ENCODE measurements at regions of chr7 and their contacts with region 1.

Region 1: DNA sequence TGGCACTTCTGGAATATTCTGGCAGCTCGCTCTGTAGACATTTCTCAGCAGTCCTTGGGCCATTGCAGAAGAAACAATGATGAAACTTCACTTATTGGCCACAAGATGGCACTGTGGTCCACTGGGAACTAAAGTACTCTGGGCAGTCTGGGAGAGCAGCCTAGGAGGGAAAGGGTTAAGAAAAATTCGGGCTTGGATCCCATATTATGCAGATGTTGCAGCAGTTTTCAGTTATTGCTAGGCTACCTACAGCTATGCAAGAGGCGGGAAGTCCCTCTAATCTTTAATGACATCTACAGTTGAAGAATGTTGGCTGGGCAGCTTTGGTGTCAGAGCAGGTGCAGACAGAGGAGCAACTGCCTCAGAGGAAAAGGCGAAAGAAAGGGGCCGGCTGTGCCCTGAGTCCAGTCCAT is 201.7 kb upstream of the PRSS58 start:
- DNase-seq: peak; percentile 59
- H3K4me3 Mint-ChIP-seq: peak overlapping the region; percentile 16
- H3K27ac Mint-ChIP-seq: peak overlapping the region; percentile 9
- H3K4me1 Mint-ChIP-seq: peaks cover 71% of the 10 kb centered on the region
- H3K27me3 Mint-ChIP-seq: no peaks in the 10 kb centered on the region

Region 2: DNA sequence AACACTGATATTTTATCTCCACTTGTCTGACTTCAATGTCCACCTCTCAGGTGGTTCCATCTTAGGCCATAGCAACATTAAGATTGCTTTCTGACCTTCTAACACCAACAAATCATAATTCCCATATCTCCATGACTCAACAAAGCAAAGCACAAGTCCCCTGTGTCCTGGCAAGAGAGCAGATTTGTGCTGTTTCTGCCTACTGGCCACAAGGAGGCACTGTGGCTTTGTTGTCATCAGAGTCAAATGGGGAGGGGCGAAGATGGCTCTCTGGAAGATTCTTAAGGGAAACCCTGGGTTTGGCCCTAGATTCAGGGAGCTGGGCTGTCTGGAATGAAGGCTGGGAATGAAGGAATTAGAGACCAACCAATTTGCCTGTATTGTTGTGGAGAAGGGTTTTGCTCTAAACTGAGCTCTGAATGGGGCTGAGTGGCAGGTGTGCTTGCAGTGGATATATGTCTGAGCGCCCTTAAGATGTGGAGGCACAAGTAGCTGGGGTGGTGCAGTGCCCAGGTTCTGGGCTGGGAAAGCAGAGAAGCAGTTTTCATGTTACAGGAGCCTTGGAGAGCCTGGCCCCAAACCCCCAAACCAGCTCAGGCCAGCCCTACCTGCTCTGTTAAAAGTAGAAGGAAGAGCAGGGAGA is 46.9 kb before region 1 on chr7:
- CTCF ChIA-PET with region 1: interaction called, 20 read pairs
- intact Hi-C with region 1: no loop called
- DNase-seq: peak; percentile 67
- H3K4me3 Mint-ChIP-seq: no peak overlapping the region
- H3K27ac Mint-ChIP-seq: no peak overlapping the region
- H3K4me1 Mint-ChIP-seq: peaks cover 2% of the 10 kb centered on the region
- H3K27me3 Mint-ChIP-seq: no peaks in the 10 kb centered on the region

Region 3: GRCh38 chr7:142469696-142470543 is 10.4 kb after region 1 on chr7:
- CTCF ChIA-PET with region 1: interaction called, 18 read pairs
- intact Hi-C with region 1: no loop called
- DNase-seq: no peak
- H3K4me3 Mint-ChIP-seq: peak overlapping the region; percentile 23
- H3K27ac Mint-ChIP-seq: no peak overlapping the region
- H3K4me1 Mint-ChIP-seq: peaks cover 58% of the 10 kb centered on the region
- H3K27me3 Mint-ChIP-seq: no peaks in the 10 kb centered on the region

Region 4: GRCh38 chr7:142516038-142516501 is 56.5 kb after region 1 on chr7:
- CTCF ChIA-PET with region 1: interaction called, 13 read pairs
- intact Hi-C with region 1: loop called (anchors 2 kb)
- DNase-seq: peak; percentile 54
- H3K4me3 Mint-ChIP-seq: no peak overlapping the region
- H3K27ac Mint-ChIP-seq: peak overlapping the region; percentile 41
- H3K4me1 Mint-ChIP-seq: peaks cover 53% of the 10 kb centered on the region
- H3K27me3 Mint-ChIP-seq: no peaks in the 10 kb centered on the region